WTC11 (cell line): ENCODE measurements at regions of chr11 and their contacts with region 1.

Region 1: GRCh38 chr11:61639816-61640443 is 40.3 kb upstream of the DAGLA start:
- DNase-seq: no peak
- ATAC-seq: no peak
- H3K4me3 Mint-ChIP-seq: no peak overlapping the region
- H3K27ac Mint-ChIP-seq: no peak overlapping the region
- H3K4me1 Mint-ChIP-seq: 0 out of 2 replicates have a peak, but pooled peaks cover 6% of the 10 kb centered on the region
- H3K27me3 Mint-ChIP-seq: no peaks in the 10 kb centered on the region
- CTCF ChIP-seq: no peak

Region 2: DNA sequence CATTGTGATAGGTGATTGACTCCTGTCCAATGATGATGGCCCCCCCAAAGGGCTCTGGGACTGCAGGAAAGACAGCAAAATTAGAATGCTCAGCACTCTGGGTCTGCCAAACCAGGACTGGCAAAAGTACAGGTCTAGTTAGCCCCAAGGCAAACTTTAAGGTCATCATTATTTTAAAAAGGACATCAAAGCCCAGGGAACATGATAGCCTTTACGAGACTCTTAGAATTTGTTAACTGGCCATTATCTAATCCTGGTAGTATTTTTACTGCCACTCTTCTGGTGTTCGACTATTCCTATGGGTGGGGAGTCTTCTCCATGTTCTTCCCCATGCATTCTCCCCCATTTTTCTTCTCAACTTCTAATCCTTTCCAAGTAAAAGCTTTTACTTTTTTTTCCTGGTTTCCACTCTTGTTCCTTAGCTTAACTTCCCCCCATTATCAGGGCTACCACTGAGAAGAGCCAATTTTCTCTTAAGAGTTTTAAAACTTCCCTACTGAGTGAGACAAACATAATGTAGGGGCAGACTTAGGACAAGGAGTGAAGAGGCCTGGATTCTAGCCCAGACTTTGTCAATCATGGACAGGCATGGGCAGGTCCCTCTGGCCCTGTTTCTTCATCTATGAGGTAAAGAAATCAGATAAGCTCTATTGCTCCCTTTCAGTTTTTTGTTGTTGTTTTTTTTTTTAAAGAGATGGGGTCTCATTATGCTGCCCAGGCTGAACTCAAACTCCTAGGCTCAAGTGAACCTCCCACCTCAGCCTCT is 314.1 kb before region 1 on chr11:
- CTCF ChIA-PET with region 1: no interaction called
- POLR2A ChIA-PET with region 1: no interaction called
- DNase-seq: no peak
- ATAC-seq: no peak
- H3K4me3 Mint-ChIP-seq: no peak overlapping the region
- H3K27ac Mint-ChIP-seq: no peak overlapping the region; the same call in 1 of the 2 replicates
- H3K4me1 Mint-ChIP-seq: no peaks in the 10 kb centered on the region; the same call in 1 of the 2 replicates
- H3K27me3 Mint-ChIP-seq: no peaks in the 10 kb centered on the region
- CTCF ChIP-seq: no peak

Region 3: GRCh38 chr11:61477727-61478148 is 162.2 kb before region 1 on chr11:
- CTCF ChIA-PET with region 1: interaction called, 52 read pairs
- POLR2A ChIA-PET with region 1: no interaction called
- DNase-seq: peak; percentile 86
- ATAC-seq: peak; percentile 43
- H3K4me3 Mint-ChIP-seq: no peak overlapping the region
- H3K27ac Mint-ChIP-seq: no peak overlapping the region
- H3K4me1 Mint-ChIP-seq: peaks cover 29% of the 10 kb centered on the region
- H3K27me3 Mint-ChIP-seq: peaks cover 3% of the 10 kb centered on the region; the same call in 1 of the 2 replicates
- CTCF ChIP-seq: peak; percentile 95

Region 4: GRCh38 chr11:61532139-61533038 is 107.5 kb before region 1 on chr11:
- CTCF ChIA-PET with region 1: interaction called, 42 read pairs
- POLR2A ChIA-PET with region 1: no interaction called
- DNase-seq: peak; percentile 77
- ATAC-seq: peak; percentile 85
- H3K4me3 Mint-ChIP-seq: no peak overlapping the region
- H3K27ac Mint-ChIP-seq: no peak overlapping the region
- H3K4me1 Mint-ChIP-seq: peaks cover 10% of the 10 kb centered on the region
- H3K27me3 Mint-ChIP-seq: no peaks in the 10 kb centered on the region
- CTCF ChIP-seq: peak; percentile 98

Region 5: GRCh38 chr11:61587521-61588453 is 52.1 kb before region 1 on chr11:
- CTCF ChIA-PET with region 1: interaction called, 52 read pairs
- POLR2A ChIA-PET with region 1: interaction called, 3 read pairs
- DNase-seq: peak; percentile 96
- ATAC-seq: peak; percentile 80
- H3K4me3 Mint-ChIP-seq: peak overlapping the region; percentile 74
- H3K27ac Mint-ChIP-seq: no peak overlapping the region
- H3K4me1 Mint-ChIP-seq: peaks cover 34% of the 10 kb centered on the region
- H3K27me3 Mint-ChIP-seq: peaks cover 59% of the 10 kb centered on the region
- CTCF ChIP-seq: no peak

Region 6: GRCh38 chr11:61650781-61651571 is 11.0 kb after region 1 on chr11:
- CTCF ChIA-PET with region 1: interaction called, 18 read pairs
- POLR2A ChIA-PET with region 1: interaction called, 3 read pairs
- DNase-seq: peak; percentile 78
- ATAC-seq: peak; percentile 80
- H3K4me3 Mint-ChIP-seq: no peak overlapping the region
- H3K27ac Mint-ChIP-seq: no peak overlapping the region
- H3K4me1 Mint-ChIP-seq: peaks cover 22% of the 10 kb centered on the region
- H3K27me3 Mint-ChIP-seq: no peaks in the 10 kb centered on the region; the same call in none of the 2 replicates
- CTCF ChIP-seq: no peak

Region 7: DNA sequence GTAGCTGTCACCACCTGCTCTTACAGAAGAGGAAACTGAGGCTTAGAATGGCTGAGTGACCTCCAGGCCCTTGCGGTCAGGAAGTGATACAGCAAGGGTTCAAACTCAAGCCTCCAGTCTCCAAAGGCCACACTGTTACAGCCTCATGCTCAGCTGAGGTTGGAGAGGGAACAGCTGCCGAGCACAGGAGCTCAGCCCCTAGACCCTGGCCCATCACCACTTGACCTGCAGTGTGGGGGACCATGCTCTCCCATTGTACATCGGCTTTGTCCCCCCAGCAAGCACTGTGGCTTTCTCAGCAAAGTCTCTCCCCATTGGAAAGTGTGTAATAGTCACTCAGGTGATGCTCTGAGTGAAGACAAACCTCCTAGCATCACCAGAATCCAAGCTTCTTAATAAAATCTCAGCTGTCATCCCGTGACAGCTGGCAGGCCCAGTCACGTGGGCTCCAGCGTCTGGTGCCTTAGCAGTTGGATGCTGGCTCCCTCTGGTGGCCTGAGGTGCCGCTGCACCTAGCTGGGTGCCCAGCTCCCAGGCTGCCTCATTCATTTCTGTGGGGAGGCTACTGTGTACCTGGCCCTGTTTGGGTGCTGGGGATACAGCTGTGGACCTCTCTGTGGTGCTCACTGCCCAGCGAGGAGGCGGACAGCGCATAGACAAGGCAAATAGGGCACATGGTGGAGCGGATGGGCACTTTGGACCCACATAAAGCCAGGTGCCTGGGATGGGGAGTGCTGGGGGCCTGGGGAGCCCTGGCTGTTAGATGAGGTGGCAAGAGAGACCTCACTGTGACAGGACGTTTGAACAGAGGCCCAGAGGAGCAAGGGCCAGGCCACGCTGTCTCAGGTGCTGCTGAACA is 93.4 kb after region 1 on chr11:
- CTCF ChIA-PET with region 1: interaction called, 42 read pairs
- POLR2A ChIA-PET with region 1: no interaction called
- DNase-seq: peak; percentile 85
- ATAC-seq: peak; percentile 66
- H3K4me3 Mint-ChIP-seq: no peak overlapping the region
- H3K27ac Mint-ChIP-seq: peak overlapping the region; percentile 39; the same call in 1 of the 2 replicates
- H3K4me1 Mint-ChIP-seq: peaks cover 2% of the 10 kb centered on the region; the same call in 1 of the 2 replicates
- H3K27me3 Mint-ChIP-seq: no peaks in the 10 kb centered on the region
- CTCF ChIP-seq: peak; percentile 89

Region 8: GRCh38 chr11:61827571-61828378 is 187.8 kb after region 1 on chr11 and contains the start of gene FADS2:
- CTCF ChIA-PET with region 1: no interaction called
- POLR2A ChIA-PET with region 1: no interaction called
- DNase-seq: peak; percentile 89
- ATAC-seq: peak; percentile 70
- H3K4me3 Mint-ChIP-seq: peak within 1 kb of the TSS; percentile 85
- H3K27ac Mint-ChIP-seq: peak within 1 kb of the TSS; percentile 97
- H3K4me1 Mint-ChIP-seq: peaks cover 48% of the 10 kb centered on the region
- H3K27me3 Mint-ChIP-seq: no peaks in the 10 kb centered on the region
- CTCF ChIP-seq: no peak
- total RNA-seq, gene FADS2: 416 to 423 TPM (median 422 TPM) in 3 replicates